Activated CD4-positive, alpha-beta memory T cell treated with anti-CD3 and anti-CD28 coated beads for 36 hours (primary cell): ENCODE measurements at regions of chr13 and their contacts with region 1.

Region 1: DNA sequence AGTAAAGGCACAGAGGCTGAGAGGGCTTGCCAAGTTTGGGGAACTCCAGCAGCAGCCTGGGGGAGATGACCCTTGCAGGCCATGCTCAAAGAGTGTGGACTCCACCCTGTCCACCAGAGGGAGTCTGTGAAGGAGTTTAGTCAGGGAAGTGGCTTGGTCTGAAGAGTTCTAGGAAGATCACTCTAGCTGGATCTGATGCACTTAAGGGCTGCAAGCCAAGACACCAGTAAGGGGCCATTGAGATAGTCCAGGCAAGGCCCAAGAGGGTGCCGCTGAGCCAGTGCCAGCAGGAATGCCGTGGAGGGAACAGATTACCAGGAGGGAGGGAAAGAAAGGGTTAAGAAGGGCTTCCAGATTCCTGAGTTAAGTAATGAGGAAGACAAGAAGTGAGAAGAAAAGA is 68.7 kb downstream of the ZAR1L start:
- DNase-seq: peak; percentile 61
- H3K4me3 Mint-ChIP-seq: no peak overlapping the region
- H3K27ac Mint-ChIP-seq: no peak overlapping the region
- H3K4me1 Mint-ChIP-seq: no peaks in the 10 kb centered on the region
- H3K27me3 Mint-ChIP-seq: no peaks in the 10 kb centered on the region

Region 2: GRCh38 chr13:32234932-32235331 is 11.5 kb before region 1 on chr13:
- CTCF ChIA-PET with region 1: interaction called, 27 read pairs
- POLR2A ChIA-PET with region 1: no interaction called
- intact Hi-C with region 1: no loop called
- DNase-seq: no peak
- H3K4me3 Mint-ChIP-seq: no peak overlapping the region
- H3K27ac Mint-ChIP-seq: no peak overlapping the region
- H3K4me1 Mint-ChIP-seq: peaks cover 5% of the 10 kb centered on the region
- H3K27me3 Mint-ChIP-seq: no peaks in the 10 kb centered on the region

Region 3: GRCh38 chr13:32632343-32632909 is 386.0 kb after region 1 on chr13:
- CTCF ChIA-PET with region 1: no interaction called
- POLR2A ChIA-PET with region 1: no interaction called
- intact Hi-C with region 1: no loop called
- DNase-seq: no peak
- H3K4me3 Mint-ChIP-seq: no peak overlapping the region
- H3K27ac Mint-ChIP-seq: no peak overlapping the region
- H3K4me1 Mint-ChIP-seq: peaks cover 19% of the 10 kb centered on the region
- H3K27me3 Mint-ChIP-seq: no peaks in the 10 kb centered on the region